Activated naive CD4-positive, alpha-beta T cell treated with anti-CD3 and anti-CD28 coated beads for 36 hours (primary cell): ENCODE measurements at regions of chr9 and their contacts with region 1.

Region 1: DNA sequence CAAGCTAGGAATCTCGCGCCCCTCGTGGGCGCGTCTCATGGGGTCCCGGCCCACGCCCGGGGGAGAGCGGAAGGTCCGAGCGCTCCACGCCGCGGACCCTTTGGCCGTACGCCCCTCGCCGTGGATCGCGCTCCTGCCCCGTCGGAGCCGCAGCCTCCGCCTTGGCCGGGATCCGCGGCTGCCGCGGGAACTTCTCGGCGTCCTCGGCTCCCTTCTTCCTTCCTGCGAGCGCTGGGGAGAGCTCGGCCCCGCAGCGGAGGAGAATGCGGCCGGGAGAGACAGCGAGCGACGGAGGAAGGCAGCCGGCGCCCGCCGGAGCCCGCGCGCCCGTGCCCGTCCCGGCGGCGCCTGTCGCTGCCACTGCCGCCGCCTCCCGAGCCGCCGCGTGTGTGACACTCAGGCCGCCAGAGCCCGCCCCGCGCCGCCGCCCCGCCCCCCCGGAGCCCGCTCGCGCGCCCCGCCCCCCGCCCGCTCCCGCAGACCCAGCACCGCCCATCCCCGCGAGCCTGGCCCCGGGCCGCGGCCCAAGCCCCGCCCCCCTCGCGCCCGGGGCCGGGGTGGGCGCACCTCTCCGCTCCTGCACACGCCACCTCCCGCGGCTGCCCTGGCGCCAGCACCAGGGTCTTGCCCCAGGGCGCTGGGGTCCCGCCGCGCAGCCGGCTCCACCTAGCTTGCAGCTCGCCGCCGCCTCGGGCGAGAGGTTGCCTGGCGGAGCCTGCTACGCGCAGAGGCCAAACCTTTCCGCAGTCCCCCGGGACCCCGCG is at the start of gene SHB:
- DNase-seq: peak; percentile 73
- H3K4me3 Mint-ChIP-seq: peak within 1 kb of the TSS; percentile 68
- H3K27ac Mint-ChIP-seq: no peak within 1 kb of the TSS
- H3K4me1 Mint-ChIP-seq: peaks cover 19% of the 10 kb centered on the region
- H3K27me3 Mint-ChIP-seq: peaks cover 8% of the 10 kb centered on the region
- total RNA-seq, gene SHB: 1.2 TPM

Region 2: DNA sequence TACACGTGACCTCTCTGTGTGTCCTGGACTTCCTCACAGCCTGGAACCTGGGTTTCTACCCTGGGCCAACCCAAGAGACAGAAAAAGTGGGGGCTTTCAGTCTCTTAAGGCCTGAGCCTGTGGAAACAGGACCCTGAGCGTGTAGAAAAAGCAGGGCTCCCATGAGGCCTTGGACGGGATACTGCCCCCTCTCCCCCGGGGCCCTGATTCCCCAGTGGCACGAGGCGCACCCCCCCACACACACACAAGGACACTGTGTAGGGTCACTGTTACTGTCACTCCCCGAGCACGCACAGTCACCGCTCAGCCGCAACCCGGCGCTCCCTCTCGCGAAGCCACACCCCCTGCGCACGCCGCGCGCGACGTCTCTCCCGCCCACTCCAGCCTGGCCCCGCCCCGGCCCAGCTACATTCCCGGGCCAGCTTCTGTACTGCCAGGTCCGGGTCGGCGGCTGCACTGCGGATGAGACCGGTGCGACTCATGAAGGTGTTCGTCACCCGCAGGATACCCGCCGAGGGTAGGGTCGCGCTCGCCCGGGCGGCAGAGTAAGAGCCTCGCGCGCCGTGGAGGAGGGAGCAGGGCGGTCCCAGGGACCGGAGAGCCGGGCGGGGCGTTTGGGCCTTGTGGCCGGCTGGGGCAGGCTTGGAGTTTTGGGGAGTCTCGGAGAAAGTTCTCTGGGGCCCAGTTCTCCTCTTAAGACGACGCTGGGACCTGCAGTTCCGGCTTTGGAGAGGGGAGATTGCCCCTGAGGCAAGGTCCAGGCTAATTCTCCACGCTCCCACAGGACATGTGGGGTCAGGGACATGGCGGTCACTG is 646.6 kb before region 1 on chr9 and contains the start of gene GRHPR:
- CTCF ChIA-PET with region 1: no interaction called
- intact Hi-C with region 1: loop called (anchors 5 kb)
- DNase-seq: peak; percentile 89
- H3K4me3 Mint-ChIP-seq: peak within 1 kb of the TSS; percentile 93
- H3K27ac Mint-ChIP-seq: peak within 1 kb of the TSS; percentile 88
- H3K4me1 Mint-ChIP-seq: peaks cover 24% of the 10 kb centered on the region
- H3K27me3 Mint-ChIP-seq: no peaks in the 10 kb centered on the region
- total RNA-seq, gene GRHPR: 72.8 to 75.6 TPM

Region 3: DNA sequence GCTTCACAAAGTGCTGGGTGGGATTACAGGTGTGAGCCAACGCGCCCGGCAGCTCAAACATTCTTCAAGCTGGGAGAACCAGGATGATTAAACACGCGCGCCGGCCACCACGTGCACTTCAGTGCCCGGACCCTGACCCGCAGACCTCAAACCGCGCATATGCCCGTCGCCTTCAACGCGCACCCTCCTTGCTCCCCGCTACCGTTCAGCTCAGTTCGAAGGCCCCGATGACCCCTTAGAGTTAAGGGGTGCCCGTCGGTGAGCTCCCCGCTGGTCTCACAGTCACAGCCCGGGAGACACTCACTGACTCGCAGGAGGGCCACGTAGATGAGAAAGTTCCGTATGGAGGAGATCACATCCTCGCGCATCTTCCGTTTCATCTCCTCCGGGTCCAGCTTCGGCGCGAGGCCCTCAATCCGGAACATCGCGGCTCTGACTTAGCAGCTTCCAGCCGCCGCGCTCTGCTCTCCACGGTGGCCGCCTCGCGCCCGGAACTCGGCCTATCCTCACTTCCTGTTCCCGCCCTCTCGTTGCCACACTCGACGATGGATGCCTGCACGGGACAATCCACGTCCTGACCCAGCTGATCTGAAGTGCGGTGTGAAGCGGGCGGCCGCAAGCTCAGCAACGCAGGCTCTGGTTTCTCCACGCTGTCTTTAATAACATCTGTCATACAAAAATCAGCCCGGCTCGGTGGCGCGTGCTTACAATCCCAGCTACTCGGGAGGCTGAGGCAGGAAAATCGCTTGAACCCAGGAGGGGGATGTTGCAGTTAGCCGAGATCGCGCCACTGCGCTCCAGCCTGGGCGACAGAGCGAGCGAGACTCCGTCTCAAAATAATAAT is 476.7 kb before region 1 on chr9 and contains the start of gene TOMM5:
- CTCF ChIA-PET with region 1: no interaction called
- intact Hi-C with region 1: loop called (anchors 5 kb)
- DNase-seq: peak; percentile 96
- H3K4me3 Mint-ChIP-seq: peak within 1 kb of the TSS; percentile 92
- H3K27ac Mint-ChIP-seq: peak within 1 kb of the TSS; percentile 93
- H3K4me1 Mint-ChIP-seq: peaks cover 37% of the 10 kb centered on the region
- H3K27me3 Mint-ChIP-seq: peaks cover 3% of the 10 kb centered on the region
- total RNA-seq, gene TOMM5: 136 to 140 TPM

Region 4: GRCh38 chr9:37913480-37914153 is 155.4 kb before region 1 on chr9:
- CTCF ChIA-PET with region 1: interaction called, 3 read pairs
- intact Hi-C with region 1: loop called (anchors 1 kb)
- DNase-seq: peak; percentile 89
- H3K4me3 Mint-ChIP-seq: no peak overlapping the region
- H3K27ac Mint-ChIP-seq: no peak overlapping the region
- H3K4me1 Mint-ChIP-seq: peaks cover 2% of the 10 kb centered on the region
- H3K27me3 Mint-ChIP-seq: no peaks in the 10 kb centered on the region

Region 5: GRCh38 chr9:38053697-38054461 is 15.2 kb before region 1 on chr9:
- CTCF ChIA-PET with region 1: no interaction called
- intact Hi-C with region 1: no loop called
- DNase-seq: no peak
- H3K4me3 Mint-ChIP-seq: no peak overlapping the region
- H3K27ac Mint-ChIP-seq: no peak overlapping the region
- H3K4me1 Mint-ChIP-seq: no peaks in the 10 kb centered on the region
- H3K27me3 Mint-ChIP-seq: no peaks in the 10 kb centered on the region

Region 6: GRCh38 chr9:38088006-38088925 is 19.2 kb after region 1 on chr9:
- CTCF ChIA-PET with region 1: interaction called, 15 read pairs
- intact Hi-C with region 1: no loop called
- DNase-seq: peak; percentile 78
- H3K4me3 Mint-ChIP-seq: no peak overlapping the region
- H3K27ac Mint-ChIP-seq: no peak overlapping the region
- H3K4me1 Mint-ChIP-seq: no peaks in the 10 kb centered on the region
- H3K27me3 Mint-ChIP-seq: no peaks in the 10 kb centered on the region

Region 7: GRCh38 chr9:38178237-38178636 is 109.2 kb after region 1 on chr9:
- CTCF ChIA-PET with region 1: no interaction called
- intact Hi-C with region 1: no loop called
- DNase-seq: no peak
- H3K4me3 Mint-ChIP-seq: no peak overlapping the region
- H3K27ac Mint-ChIP-seq: no peak overlapping the region
- H3K4me1 Mint-ChIP-seq: peaks cover 6% of the 10 kb centered on the region
- H3K27me3 Mint-ChIP-seq: peaks cover 4% of the 10 kb centered on the region

Region 8: GRCh38 chr9:38451162-38451561 is 382.1 kb after region 1 on chr9:
- CTCF ChIA-PET with region 1: no interaction called
- intact Hi-C with region 1: no loop called
- DNase-seq: no peak
- H3K4me3 Mint-ChIP-seq: no peak overlapping the region
- H3K27ac Mint-ChIP-seq: no peak overlapping the region
- H3K4me1 Mint-ChIP-seq: no peaks in the 10 kb centered on the region
- H3K27me3 Mint-ChIP-seq: peaks cover 3% of the 10 kb centered on the region